Activated B cell treated with CpG ODN at 0.5 μM for 24 hours (primary cell): ENCODE measurements at regions of chr4 and their contacts with region 1.

Region 1: GRCh38 chr4:2811830-2812611 is 19.1 kb downstream of the SH3BP2 start:
- DNase-seq: peak; percentile 65
- ATAC-seq: peak; percentile 80
- H3K4me3 Mint-ChIP-seq: peak overlapping the region; percentile 85
- H3K27ac Mint-ChIP-seq: peak overlapping the region; percentile 96
- H3K4me1 Mint-ChIP-seq: peaks cover 89% of the 10 kb centered on the region
- H3K27me3 Mint-ChIP-seq: no peaks in the 10 kb centered on the region
- CTCF ChIP-seq: no peak

Region 2: GRCh38 chr4:2800691-2801596 is 11.1 kb before region 1 on chr4:
- CTCF ChIA-PET with region 1: interaction called, 3 read pairs
- POLR2A ChIA-PET with region 1: interaction called, 56 read pairs
- intact Hi-C with region 1: no loop called
- DNase-seq: peak; percentile 60
- ATAC-seq: peak; percentile 79
- H3K4me3 Mint-ChIP-seq: peak overlapping the region; percentile 68
- H3K27ac Mint-ChIP-seq: peak overlapping the region; percentile 75
- H3K4me1 Mint-ChIP-seq: peaks cover 84% of the 10 kb centered on the region
- H3K27me3 Mint-ChIP-seq: no peaks in the 10 kb centered on the region
- CTCF ChIP-seq: no peak

Region 3: DNA sequence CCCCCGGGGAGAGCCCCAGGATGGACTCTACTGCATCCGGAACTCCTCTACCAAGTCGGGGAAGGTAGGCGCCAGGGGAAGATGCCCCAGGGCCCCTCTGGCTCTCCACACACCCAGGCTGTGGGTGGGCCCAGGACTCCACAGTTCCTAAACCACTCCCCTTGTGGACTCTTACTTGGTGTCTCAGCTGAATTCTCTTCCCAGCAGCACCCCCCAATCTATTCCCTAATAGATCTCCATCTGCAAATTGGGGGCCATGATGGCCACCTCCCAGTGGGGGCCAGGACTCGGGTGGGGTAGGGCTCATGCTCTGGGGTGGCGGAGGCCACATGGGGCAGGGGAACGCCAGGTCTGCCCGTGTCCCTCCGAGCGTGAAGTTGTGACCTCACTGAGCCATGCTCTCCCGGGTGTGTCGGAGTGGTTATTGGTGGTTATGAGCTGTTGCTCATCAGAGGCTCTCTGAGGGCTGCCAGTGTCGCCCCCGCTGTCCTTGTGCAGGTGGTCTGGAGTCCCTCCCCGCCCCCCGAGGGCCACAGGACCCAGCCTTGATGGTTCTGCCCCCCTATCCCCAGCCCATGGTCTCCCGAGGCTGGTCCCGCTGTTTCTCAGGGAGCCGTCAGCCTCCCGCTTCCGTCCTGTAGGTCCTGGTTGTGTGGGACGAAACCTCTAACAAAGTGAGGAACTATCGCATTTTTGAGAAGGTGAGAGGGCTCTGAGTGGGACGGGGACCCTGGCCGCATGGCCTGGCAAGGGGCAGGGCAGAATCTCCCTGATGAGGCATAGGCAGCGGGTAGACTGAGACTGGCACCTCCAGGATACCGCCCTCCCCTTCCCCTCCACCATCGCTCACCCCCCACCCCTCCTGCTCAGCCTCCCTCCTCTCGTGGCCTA is 20.6 kb after region 1 on chr4:
- CTCF ChIA-PET with region 1: no interaction called
- POLR2A ChIA-PET with region 1: interaction called, 15 read pairs
- intact Hi-C with region 1: loop called (anchors 1 kb)
- DNase-seq: peak; percentile 65
- ATAC-seq: peak; percentile 85
- H3K4me3 Mint-ChIP-seq: peak overlapping the region; percentile 67
- H3K27ac Mint-ChIP-seq: peak overlapping the region; percentile 83
- H3K4me1 Mint-ChIP-seq: peaks cover 60% of the 10 kb centered on the region
- H3K27me3 Mint-ChIP-seq: no peaks in the 10 kb centered on the region
- CTCF ChIP-seq: no peak

Region 4: GRCh38 chr4:2837904-2838496 is 26.0 kb after region 1 on chr4:
- CTCF ChIA-PET with region 1: interaction called, 3 read pairs
- POLR2A ChIA-PET with region 1: interaction called, 15 read pairs
- intact Hi-C with region 1: loop called (anchors 1 kb)
- DNase-seq: peak; percentile 32
- ATAC-seq: peak; percentile 54
- H3K4me3 Mint-ChIP-seq: peak overlapping the region; percentile 74
- H3K27ac Mint-ChIP-seq: peak overlapping the region; percentile 81
- H3K4me1 Mint-ChIP-seq: peaks cover 74% of the 10 kb centered on the region
- H3K27me3 Mint-ChIP-seq: no peaks in the 10 kb centered on the region
- CTCF ChIP-seq: no peak

Region 5: GRCh38 chr4:3168029-3168428 is 356.0 kb after region 1 on chr4:
- CTCF ChIA-PET with region 1: no interaction called
- POLR2A ChIA-PET with region 1: no interaction called
- intact Hi-C with region 1: no loop called
- DNase-seq: no peak
- ATAC-seq: peak; percentile 79
- H3K4me3 Mint-ChIP-seq: no peak overlapping the region
- H3K27ac Mint-ChIP-seq: peak overlapping the region; percentile 62
- H3K4me1 Mint-ChIP-seq: peaks cover 6% of the 10 kb centered on the region
- H3K27me3 Mint-ChIP-seq: no peaks in the 10 kb centered on the region
- CTCF ChIP-seq: no peak

Region 6: GRCh38 chr4:3630468-3631287 is 818.7 kb after region 1 on chr4:
- CTCF ChIA-PET with region 1: no interaction called
- POLR2A ChIA-PET with region 1: no interaction called
- intact Hi-C with region 1: no loop called
- DNase-seq: no peak
- ATAC-seq: no peak
- H3K4me3 Mint-ChIP-seq: no peak overlapping the region
- H3K27ac Mint-ChIP-seq: no peak overlapping the region
- H3K4me1 Mint-ChIP-seq: no peaks in the 10 kb centered on the region
- H3K27me3 Mint-ChIP-seq: peaks cover 3% of the 10 kb centered on the region
- CTCF ChIP-seq: no peak